ENCODE measurements at regions of chr2 and their contacts with region 1.

Region 1: GRCh38 chr2:50143822-50144575 is 887.9 kb downstream of the NRXN1 start:
- DNase-seq: peak in 20 of 42 donors; percentile 3 to 72 (median 28)

Region 2: GRCh38 chr2:49687918-49688317 is 456.1 kb before region 1 on chr2:
- intact Hi-C with region 1: loop called (anchors 5 kb)
- DNase-seq: no peak

Region 3: DNA sequence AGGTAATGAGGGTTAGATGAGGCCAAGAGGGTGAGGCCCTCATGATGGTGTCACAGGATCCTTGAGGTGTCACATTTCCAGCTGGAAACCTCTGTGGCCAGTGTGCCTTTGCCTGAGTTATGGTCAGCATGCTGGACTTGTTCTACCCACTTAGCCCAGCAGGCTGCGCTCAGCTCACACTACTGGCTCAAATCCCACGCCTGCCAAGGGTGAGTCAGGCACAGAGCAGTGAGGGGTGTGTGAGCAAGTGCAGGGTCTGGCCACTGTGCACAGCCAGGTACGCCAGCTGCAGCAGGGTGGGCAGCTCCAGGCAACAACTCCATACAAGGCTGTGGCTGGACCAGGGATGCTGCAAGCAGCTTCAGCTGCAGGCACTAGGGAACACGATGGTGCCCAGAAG is 373.1 kb before region 1 on chr2:
- intact Hi-C with region 1: loop called (anchors 10 kb)
- DNase-seq: peak in 41 of 42 donors; percentile 6 to 83 (median 49)